WTC11 (cell line): ENCODE measurements at regions of chr14 and their contacts with region 1.

Region 1: GRCh38 chr14:104078031-104078455 is 7.5 kb upstream of the ASPG start:
- DNase-seq: peak; percentile 95
- ATAC-seq: peak; percentile 95
- H3K4me3 Mint-ChIP-seq: no peak overlapping the region
- H3K27ac Mint-ChIP-seq: no peak overlapping the region
- H3K4me1 Mint-ChIP-seq: peaks cover 7% of the 10 kb centered on the region
- H3K27me3 Mint-ChIP-seq: peaks cover 4% of the 10 kb centered on the region
- CTCF ChIP-seq: peak; percentile 89

Region 2: GRCh38 chr14:104016873-104017650 is 61.0 kb before region 1 on chr14:
- CTCF ChIA-PET with region 1: interaction called, 11 read pairs
- POLR2A ChIA-PET with region 1: no interaction called
- DNase-seq: no peak
- ATAC-seq: no peak
- H3K4me3 Mint-ChIP-seq: no peak overlapping the region
- H3K27ac Mint-ChIP-seq: no peak overlapping the region
- H3K4me1 Mint-ChIP-seq: no peaks in the 10 kb centered on the region
- H3K27me3 Mint-ChIP-seq: no peaks in the 10 kb centered on the region; the same call in 1 of the 2 replicates
- CTCF ChIP-seq: no peak

Region 3: DNA sequence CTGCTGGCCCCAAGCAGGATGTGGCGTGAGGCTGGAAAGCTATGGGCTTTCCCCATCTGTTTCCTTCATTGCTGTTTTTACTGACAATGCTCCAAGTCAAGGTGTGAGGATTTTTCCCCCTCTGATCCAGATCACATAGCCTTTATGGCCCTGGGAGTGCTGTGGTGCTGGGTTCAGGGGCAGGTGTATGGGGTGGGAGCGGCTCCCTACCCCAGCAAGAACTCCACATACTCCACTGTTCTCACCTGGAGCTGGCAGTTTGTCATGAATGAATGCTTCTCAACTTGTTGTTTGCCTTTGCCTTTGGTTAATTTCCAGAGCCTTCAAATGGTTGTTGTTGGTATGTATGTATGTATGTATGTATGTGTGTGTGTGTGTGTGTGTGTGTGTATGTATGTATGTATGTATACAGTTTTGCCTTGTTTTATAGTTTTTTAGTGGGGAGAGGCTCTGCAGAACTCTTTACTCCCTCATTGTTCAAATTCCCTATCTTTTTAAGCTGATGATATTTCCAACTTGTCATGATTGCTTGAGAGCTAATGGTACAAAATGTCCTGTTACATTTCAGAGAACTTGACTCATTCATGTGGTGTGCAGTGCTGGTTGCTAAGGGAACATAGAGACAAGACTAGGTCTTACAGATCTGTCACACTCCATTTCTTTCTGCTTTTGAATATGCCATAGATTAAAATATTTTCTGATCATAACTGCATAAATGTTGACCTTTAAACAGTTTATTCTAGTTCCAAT is 29.1 kb before region 1 on chr14:
- CTCF ChIA-PET with region 1: interaction called, 13 read pairs
- POLR2A ChIA-PET with region 1: no interaction called
- DNase-seq: no peak
- ATAC-seq: no peak
- H3K4me3 Mint-ChIP-seq: no peak overlapping the region
- H3K27ac Mint-ChIP-seq: no peak overlapping the region
- H3K4me1 Mint-ChIP-seq: no peaks in the 10 kb centered on the region
- H3K27me3 Mint-ChIP-seq: peaks cover 2% of the 10 kb centered on the region; the same call in 1 of the 2 replicates
- CTCF ChIP-seq: no peak

Region 4: DNA sequence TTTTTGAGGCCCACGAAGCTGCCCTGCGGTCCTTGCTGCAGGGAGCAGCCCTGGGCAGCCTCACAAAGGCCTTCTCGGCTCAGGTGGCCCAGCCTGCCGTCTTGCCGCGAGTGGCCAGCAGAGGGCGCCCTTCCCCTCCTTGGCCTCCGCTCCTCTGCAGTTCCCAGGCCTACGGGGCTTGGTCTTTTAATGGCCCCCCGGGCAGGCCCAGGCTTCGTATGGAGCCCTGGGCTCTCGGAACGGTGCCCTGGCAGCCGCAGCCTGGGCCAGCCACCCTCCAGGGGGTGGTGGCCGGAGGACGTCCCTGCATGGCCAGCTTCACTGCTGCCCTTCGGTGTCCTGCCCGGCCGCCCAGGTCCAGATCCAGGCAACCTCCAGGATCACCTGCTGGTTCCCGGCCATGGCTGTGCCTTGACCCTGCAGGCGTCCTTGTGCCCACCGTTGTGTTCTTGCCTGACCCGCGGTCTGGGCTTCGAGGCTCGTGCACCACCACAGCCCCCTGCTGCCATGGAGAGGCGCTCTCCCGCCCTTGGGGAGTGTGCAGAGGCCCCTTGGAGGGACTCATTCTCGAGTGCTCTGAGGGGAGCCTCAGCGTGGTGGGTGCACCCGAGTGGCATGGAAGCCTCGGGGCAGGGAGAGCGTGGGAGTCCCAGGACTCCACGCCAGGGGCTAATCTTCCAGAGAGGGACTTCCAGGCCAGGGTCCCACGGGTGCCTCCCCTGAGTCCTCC is 16.8 kb after region 1 on chr14:
- CTCF ChIA-PET with region 1: interaction called, 42 read pairs
- POLR2A ChIA-PET with region 1: no interaction called
- DNase-seq: peak; percentile 94
- ATAC-seq: peak; percentile 87
- H3K4me3 Mint-ChIP-seq: no peak overlapping the region
- H3K27ac Mint-ChIP-seq: no peak overlapping the region; the same call in 1 of the 2 replicates
- H3K4me1 Mint-ChIP-seq: peaks cover 5% of the 10 kb centered on the region
- H3K27me3 Mint-ChIP-seq: no peaks in the 10 kb centered on the region
- CTCF ChIP-seq: peak; percentile 97

Region 5: DNA sequence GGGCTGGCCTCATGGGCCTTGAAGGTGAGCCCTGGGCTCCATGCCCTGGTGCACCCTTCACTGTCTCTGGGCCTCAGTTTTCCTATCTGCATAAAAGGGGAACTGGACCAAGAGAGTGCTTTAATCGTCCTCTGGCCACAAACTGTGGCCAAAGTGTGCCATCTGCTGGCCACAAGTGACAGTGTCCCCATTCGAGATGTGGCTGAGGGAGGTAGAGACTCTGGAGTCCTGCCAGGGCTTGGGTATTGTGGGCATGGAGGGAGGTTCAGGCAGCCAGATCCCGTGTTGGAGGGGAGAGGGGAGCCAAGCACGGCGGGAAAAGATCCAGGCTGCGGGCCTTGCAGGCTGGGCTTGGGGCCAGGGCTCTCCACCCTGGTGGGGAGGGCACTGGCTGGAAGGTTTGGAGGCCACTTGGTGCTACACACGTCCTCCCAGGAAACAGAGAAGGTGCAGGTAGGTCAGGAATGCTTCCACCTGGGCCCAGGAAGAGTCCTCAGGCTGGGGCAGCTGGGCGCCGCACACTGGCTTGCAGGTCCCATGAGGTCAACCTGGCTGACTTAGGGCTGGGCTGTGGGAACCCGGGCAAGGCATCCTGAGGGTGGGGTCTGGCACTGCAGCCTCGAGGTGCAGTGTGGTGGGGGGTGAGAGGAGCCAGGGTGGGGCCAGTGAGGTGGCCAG is 53.1 kb after region 1 on chr14:
- CTCF ChIA-PET with region 1: interaction called, 21 read pairs
- POLR2A ChIA-PET with region 1: no interaction called
- DNase-seq: peak; percentile 46
- ATAC-seq: peak; percentile 38
- H3K4me3 Mint-ChIP-seq: no peak overlapping the region
- H3K27ac Mint-ChIP-seq: no peak overlapping the region
- H3K4me1 Mint-ChIP-seq: peaks cover 8% of the 10 kb centered on the region
- H3K27me3 Mint-ChIP-seq: peaks cover 34% of the 10 kb centered on the region
- CTCF ChIP-seq: peak; percentile 59

Region 6: DNA sequence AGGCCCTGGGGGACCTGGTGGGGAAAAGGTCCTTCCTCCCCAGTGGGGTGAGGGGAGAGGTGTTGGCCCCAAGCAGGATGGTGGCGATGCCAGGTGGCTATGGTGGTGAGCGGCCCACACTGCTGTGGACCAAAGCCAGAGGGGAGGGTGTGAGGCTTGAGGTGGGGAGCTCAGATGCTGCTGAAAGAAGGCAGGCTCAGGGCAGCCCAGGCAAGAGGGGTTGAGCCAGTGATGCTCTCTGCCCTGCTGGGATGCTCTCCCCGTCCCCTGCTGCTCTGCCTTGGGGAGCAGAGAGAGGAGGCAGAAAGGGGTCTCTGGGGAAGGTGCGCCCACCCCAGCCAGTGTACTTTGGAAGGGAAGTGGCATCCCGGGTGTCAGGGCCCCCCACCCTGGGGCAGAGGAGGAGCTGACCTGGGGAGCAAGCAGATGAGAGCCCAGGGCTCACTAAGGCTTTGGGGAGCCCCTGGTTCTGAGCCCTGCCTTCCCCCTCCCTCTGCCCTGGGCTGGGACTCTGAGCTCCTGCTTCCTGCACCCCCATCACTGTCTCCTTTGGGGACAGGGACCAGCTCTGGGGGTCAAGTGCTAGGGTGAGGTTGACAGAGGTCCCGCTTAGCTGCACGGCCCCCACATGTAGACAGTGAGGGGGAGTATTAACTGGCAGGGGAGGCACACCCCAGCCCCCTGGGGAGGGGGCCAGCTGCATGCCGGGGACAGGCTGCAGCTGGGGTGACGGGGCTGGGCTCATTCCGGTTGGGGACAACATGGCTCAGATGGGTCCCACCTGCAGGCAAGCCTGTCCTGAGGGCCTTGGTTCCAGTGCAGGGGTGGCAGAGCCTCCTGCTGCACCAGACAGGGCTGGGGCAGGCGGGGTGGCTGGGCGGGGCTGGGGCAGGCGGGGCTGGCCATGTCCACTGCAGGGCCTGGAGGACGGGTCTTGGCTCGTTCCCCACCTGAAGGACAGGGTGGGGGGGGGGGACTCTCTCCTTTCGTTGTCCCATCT is 184.8 kb after region 1 on chr14:
- CTCF ChIA-PET with region 1: no interaction called
- POLR2A ChIA-PET with region 1: no interaction called
- DNase-seq: no peak
- ATAC-seq: no peak
- H3K4me3 Mint-ChIP-seq: no peak overlapping the region
- H3K27ac Mint-ChIP-seq: no peak overlapping the region
- H3K4me1 Mint-ChIP-seq: peaks cover under 1% of the 10 kb centered on the region; the same call in 1 of the 2 replicates
- H3K27me3 Mint-ChIP-seq: no peaks in the 10 kb centered on the region; the same call in 1 of the 2 replicates
- CTCF ChIP-seq: no peak